ENCODE measurements at regions of chr9 and their contacts with region 1.

Region 1: GRCh38 chr9:37496020-37496419 is 10.3 kb downstream of the POLR1E start:
- DNase-seq: no peak
- H3K4me3 ChIP-seq: no peak overlapping the region
- CTCF ChIP-seq: no peak
- POLR2A ChIP-seq: no peak

Region 2: GRCh38 chr9:37550781-37551180 is 54.8 kb after region 1 on chr9:
- intact Hi-C with region 1: loop called (anchors 10 kb)
- DNase-seq: no peak
- H3K4me3 ChIP-seq: no peak overlapping the region
- CTCF ChIP-seq: no peak
- POLR2A ChIP-seq: no peak

Region 3: DNA sequence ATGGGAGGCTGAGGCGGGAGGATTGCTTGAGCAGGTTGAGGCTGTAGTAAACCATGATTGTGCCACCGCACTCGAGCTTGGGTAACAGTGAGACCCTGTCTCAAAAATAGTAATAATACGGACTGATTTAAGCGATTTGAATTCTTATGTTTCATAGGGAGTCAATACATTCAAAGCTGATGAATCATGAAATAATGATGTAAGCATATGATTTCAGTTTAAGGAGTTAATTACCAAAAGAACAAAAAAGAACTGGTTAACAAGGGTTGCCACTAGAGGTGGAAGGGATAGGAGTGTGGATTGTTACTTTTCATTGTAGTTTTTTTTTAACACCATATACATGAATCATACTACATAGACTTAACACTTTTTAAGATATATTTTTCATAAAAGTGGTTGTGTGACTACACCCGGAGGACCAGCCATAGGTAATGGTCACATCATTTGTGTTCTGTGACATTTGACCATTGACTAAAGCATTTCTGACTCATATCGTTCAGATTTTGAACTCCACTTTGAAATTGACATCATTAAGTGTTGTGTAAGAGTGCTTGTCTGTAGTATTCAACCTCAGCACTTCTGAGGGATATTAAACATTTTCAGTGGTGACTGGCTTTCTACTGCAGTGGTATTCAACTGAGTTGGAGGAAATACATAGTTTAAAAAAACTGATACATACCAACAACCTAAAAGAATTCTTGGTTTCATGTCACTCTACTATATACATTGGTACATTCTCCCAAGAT is 264.6 kb after region 1 on chr9:
- intact Hi-C with region 1: loop called (anchors 10 kb)
- DNase-seq: no peak
- H3K4me3 ChIP-seq: no peak overlapping the region
- CTCF ChIP-seq: no peak
- POLR2A ChIP-seq: no peak

Measured in lower leg skin (tissue), 4 donors.